ENCODE measurements at regions of chr3 and their contacts with region 1.

Region 1: DNA sequence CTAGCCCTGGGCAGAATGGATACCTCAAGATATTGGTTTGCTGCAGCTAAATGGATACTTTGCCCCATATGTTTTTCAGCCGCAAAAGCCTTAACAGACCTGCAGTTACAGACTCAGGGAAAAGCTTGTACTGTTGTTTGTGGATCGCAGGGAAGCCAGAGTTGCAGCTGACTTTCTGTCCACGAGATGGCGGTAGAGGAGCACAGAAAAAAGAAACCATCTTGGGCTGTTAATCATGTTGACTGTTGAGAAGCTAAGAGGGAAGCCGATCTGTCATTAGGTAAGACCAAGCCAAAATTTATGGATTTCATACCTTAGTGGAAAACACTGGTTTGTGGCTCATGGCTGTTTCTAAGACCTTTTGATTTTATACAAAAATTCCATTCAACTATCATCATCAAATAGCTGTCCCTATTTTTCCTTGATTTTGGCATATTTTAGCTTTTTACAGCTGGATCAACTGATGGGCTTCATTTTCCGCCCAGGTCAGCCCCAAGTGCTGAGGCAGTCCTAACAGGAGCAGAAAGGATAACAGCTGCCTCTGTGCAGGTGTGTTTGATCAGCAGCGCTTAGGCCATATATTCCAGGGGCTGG is 205.7 kb upstream of the ZPLD1 start:
- DNase-seq: peak; percentile 42
- H3K4me3 ChIP-seq: no peak overlapping the region
- H3K27ac ChIP-seq: no peak overlapping the region
- H3K27me3 ChIP-seq: no peaks in the 10 kb centered on the region
- CTCF ChIP-seq: peak; percentile 98

Region 2: DNA sequence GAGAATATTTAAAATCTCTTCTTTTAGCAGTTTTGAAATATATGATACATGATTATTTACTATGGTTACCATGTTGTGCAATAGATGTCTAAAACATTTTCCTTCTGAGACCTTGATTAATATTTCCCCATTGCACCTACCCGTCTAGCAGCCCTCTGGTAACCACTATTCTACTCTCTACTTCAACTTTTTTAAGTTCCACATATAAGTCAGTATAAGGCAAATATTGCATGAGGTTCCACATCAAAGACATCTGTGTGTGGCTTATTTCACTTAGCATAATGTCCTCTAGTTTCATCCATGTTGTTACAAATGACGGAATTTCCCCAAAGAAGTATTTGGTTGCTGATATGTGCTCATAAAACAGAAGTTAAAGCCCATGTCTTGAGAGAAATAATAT is 409.4 kb before region 1 on chr3:
- CTCF ChIA-PET with region 1: interaction called, 821 read pairs
- POLR2A ChIA-PET with region 1: no interaction called
- DNase-seq: no peak
- H3K4me3 ChIP-seq: no peak overlapping the region
- H3K27ac ChIP-seq: no peak overlapping the region
- H3K27me3 ChIP-seq: no peaks in the 10 kb centered on the region
- CTCF ChIP-seq: no peak

Region 3: GRCh38 chr3:101842245-101842934 is 386.8 kb before region 1 on chr3:
- CTCF ChIA-PET with region 1: interaction called, 25 read pairs
- POLR2A ChIA-PET with region 1: no interaction called
- DNase-seq: no peak
- H3K4me3 ChIP-seq: no peak overlapping the region
- H3K27ac ChIP-seq: no peak overlapping the region
- H3K27me3 ChIP-seq: no peaks in the 10 kb centered on the region
- CTCF ChIP-seq: no peak

Region 4: GRCh38 chr3:101926594-101927105 is 302.5 kb before region 1 on chr3:
- CTCF ChIA-PET with region 1: interaction called, 10 read pairs
- POLR2A ChIA-PET with region 1: no interaction called
- DNase-seq: no peak
- H3K4me3 ChIP-seq: no peak overlapping the region
- H3K27ac ChIP-seq: no peak overlapping the region
- H3K27me3 ChIP-seq: no peaks in the 10 kb centered on the region
- CTCF ChIP-seq: no peak

Region 5: GRCh38 chr3:102141096-102141927 is 87.8 kb before region 1 on chr3:
- CTCF ChIA-PET with region 1: interaction called, 15 read pairs
- POLR2A ChIA-PET with region 1: no interaction called
- DNase-seq: no peak
- H3K4me3 ChIP-seq: no peak overlapping the region
- H3K27ac ChIP-seq: no peak overlapping the region
- H3K27me3 ChIP-seq: no peaks in the 10 kb centered on the region
- CTCF ChIP-seq: no peak

Region 6: GRCh38 chr3:102206511-102207031 is 22.6 kb before region 1 on chr3:
- CTCF ChIA-PET with region 1: interaction called, 18 read pairs
- POLR2A ChIA-PET with region 1: no interaction called
- DNase-seq: peak; percentile 30
- H3K4me3 ChIP-seq: no peak overlapping the region
- H3K27ac ChIP-seq: no peak overlapping the region
- H3K27me3 ChIP-seq: no peaks in the 10 kb centered on the region
- CTCF ChIP-seq: no peak

Region 7: GRCh38 chr3:102646557-102646956 is 417.4 kb after region 1 on chr3:
- CTCF ChIA-PET with region 1: no interaction called
- POLR2A ChIA-PET with region 1: no interaction called
- DNase-seq: no peak
- H3K4me3 ChIP-seq: no peak overlapping the region
- H3K27ac ChIP-seq: no peak overlapping the region
- H3K27me3 ChIP-seq: no peaks in the 10 kb centered on the region
- CTCF ChIP-seq: no peak

Region 8: DNA sequence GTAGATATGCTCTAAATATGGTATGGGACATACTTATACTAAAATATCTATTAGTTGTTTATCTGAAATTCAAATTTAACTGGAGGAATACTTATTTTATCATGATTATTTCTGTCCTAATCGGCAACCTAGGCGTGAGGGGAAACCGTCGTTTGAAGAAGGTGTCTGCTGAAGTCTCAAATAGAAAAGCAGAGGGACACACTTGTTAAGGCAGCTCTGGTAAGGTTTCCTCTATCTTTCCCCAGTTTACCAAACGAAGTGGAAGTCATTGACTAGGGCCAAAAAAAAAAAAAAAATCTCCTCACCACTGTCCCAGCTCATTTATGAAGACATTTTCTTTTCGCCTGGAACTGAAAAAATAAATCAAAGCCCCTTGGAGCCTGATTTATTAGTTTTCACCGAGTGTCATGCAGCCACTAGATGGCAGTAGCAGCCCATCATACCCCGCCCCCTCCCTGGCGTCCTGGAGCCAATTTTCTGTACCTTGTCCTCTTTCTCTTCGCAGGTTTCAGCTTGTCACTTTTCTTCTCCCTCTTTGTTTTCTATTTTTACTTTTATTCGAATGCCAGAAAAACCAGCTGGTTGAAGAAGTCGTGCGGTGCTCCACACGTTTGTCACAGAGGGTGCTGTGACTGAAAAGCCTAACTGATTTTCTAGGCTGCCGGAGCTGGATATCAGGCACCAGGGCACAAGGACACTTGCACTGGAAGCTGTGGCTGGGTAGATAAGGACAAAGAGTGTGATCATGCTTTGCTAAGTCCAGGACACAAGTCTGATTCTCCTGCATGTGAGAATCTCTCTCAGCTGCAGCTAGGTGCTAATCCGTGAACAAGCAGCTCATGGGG is 444.3 kb after region 1 on chr3:
- CTCF ChIA-PET with region 1: interaction called, 16 read pairs
- POLR2A ChIA-PET with region 1: no interaction called
- DNase-seq: no peak
- H3K4me3 ChIP-seq: no peak overlapping the region
- H3K27ac ChIP-seq: no peak overlapping the region
- H3K27me3 ChIP-seq: no peaks in the 10 kb centered on the region
- CTCF ChIP-seq: peak; percentile 90